ENCODE measurements at regions of chr10 and their contacts with region 1.

Region 1: GRCh38 chr10:49419005-49419404 is 23.1 kb upstream of the DRGX start:
- DNase-seq: no peak
- ATAC-seq: no peak
- H3K4me3 ChIP-seq: no peak overlapping the region
- H3K27ac ChIP-seq: no peak overlapping the region
- H3K4me1 ChIP-seq: no peaks in the 10 kb centered on the region
- CTCF ChIP-seq: no peak
- EP300 ChIP-seq: no peak
- POLR2A ChIP-seq: no peak
- RAD21 ChIP-seq: no peak

Region 2: GRCh38 chr10:49407552-49408137 is 11.4 kb before region 1 on chr10:
- CTCF ChIA-PET with region 1: interaction called, 22 read pairs
- POLR2A ChIA-PET with region 1: no interaction called
- DNase-seq: peak; percentile 62 to 85
- ATAC-seq: peak; percentile 90 to 97
- H3K4me3 ChIP-seq: no peak overlapping the region
- H3K27ac ChIP-seq: no peak overlapping the region
- H3K4me1 ChIP-seq: no peaks in the 10 kb centered on the region
- CTCF ChIP-seq: peak; percentile 82
- EP300 ChIP-seq: no peak
- POLR2A ChIP-seq: no peak
- RAD21 ChIP-seq: peak; percentile 68 to 75

Region 3: DNA sequence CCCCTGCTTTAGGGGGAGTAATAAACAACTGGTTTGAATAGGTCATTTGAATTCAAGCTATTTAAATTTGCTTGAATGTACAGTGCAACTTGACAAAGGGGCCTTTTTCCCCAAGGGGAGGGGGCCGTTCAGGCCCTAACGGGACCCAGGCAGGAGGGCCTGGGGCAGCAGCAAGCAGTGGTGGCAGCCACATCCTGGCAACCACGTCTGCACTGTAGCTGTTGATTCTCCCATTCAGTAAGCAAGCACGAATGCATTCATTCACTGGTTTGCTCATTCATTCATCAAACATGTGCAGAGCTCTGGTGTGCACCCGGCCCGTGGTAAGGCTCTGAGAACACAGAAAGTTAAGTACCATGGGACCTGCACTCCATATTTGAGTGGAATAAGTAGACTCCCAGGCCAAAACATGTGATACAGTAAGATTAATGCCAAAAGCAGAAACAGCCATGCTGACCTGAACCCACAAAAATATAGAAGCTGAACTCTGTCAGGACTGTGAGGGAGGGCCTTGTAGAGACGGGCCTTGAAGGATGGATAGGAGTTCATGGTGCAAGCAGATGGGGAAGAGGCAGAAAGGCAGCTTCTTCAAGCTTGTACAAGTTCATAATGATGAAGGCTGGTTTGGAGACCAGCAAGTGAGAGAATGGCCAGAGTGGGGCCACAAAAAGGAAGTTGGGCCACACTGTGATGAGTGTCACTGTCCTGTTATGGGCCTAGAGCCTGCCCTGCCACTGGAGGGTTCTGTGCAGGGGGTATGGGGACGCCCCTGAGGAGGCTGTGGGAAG is 231.1 kb after region 1 on chr10:
- CTCF ChIA-PET with region 1: no interaction called
- POLR2A ChIA-PET with region 1: no interaction called
- DNase-seq: no peak
- ATAC-seq: no peak
- H3K4me3 ChIP-seq: no peak overlapping the region
- H3K27ac ChIP-seq: no peak overlapping the region
- H3K4me1 ChIP-seq: no peaks in the 10 kb centered on the region
- CTCF ChIP-seq: no peak
- EP300 ChIP-seq: no peak
- POLR2A ChIP-seq: no peak
- RAD21 ChIP-seq: no peak

Measured in A549 (cell line).